ENCODE measurements at regions of chr15 and their contacts with region 1.

Region 1: DNA sequence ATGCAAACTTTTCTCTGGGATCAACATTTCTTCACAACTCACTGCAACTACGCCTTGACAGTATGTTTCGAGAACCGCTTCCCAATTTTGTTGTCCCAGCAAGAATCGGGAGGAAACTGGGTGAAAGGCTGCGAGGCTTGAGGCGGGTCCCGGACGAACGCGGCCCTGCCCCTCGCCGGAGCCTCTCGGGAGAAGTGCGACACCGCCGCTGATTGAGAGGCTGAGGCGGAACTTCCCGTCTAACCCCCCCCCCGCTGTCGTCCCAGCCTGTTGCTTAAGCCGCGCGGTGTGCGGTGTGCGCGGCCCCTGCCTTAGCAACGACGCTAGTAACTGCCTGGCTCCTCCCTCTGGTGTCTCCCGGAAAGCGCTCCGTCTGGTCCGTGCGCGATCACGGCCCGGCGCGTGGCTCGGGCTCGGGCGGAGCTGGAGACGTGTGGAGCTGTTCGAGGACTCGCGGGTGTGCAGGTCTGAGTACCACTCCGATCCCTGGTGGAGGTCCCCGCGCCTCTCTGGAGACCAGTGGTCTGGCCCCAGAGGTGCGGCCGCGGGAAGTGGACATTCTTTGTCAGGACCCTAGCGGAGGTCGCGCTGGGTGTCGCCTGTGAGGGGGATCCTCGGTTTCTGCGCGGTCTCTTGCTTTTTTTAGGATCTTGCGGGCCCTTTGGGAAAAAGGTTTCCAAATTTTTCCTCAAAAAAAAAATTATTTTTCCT is at the starts of genes DTWD1 and FAM227B:
- DNase-seq: peak; percentile 98 to 99
- ATAC-seq: peak; percentile 100
- H3K4me3 ChIP-seq: peak within 1 kb of the TSS; percentile 86 to 92
- H3K27ac ChIP-seq: peak within 1 kb of the TSS; percentile 79 to 86
- H3K4me1 ChIP-seq: peaks cover 0 to 4% of the 10 kb centered on the region in 2 donors
- H3K27me3 ChIP-seq: no peaks in the 10 kb centered on the region
- total RNA-seq, gene DTWD1: 30.0 to 54.4 TPM
- total RNA-seq, gene FAM227B: 4.2 to 4.8 TPM

Region 2: GRCh38 chr15:49155110-49155833 is 465.5 kb before region 1 on chr15 and contains the start of gene COPS2:
- intact Hi-C with region 1: loop called in 1 of 2 experiments (anchors 2 kb)
- DNase-seq: peak; percentile 94 to 95
- ATAC-seq: peak; percentile 99
- H3K4me3 ChIP-seq: peak within 1 kb of the TSS; percentile 91 to 97
- H3K27ac ChIP-seq: peak within 1 kb of the TSS in 1 of 2 donors; percentile 87
- H3K4me1 ChIP-seq: no peaks in the 10 kb centered on the region
- H3K27me3 ChIP-seq: no peaks in the 10 kb centered on the region
- total RNA-seq, gene COPS2: 60.9 to 69.3 TPM

Region 3: DNA sequence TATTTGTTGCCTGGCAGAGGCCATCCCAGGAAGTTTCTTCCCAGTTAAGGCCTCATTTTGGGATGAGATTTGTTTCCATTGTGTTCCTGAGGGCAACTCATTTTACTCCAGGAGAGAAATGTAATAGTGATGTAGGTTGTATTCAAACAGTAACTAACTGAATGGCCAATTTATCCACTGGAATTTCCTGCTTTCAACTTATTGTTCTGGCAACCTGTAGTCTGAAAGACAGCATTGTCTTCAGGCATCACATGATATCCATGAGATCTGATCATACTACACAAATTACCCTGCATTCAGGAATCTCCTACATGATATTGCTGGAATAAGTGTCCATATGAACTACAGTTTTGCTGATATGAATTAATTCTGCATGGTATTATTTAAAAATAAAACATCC is 277.3 kb before region 1 on chr15:
- intact Hi-C with region 1: no loop called
- DNase-seq: no peak
- ATAC-seq: no peak
- H3K4me3 ChIP-seq: no peak overlapping the region
- H3K27ac ChIP-seq: no peak overlapping the region
- H3K4me1 ChIP-seq: no peaks in the 10 kb centered on the region
- H3K27me3 ChIP-seq: no peaks in the 10 kb centered on the region

Region 4: DNA sequence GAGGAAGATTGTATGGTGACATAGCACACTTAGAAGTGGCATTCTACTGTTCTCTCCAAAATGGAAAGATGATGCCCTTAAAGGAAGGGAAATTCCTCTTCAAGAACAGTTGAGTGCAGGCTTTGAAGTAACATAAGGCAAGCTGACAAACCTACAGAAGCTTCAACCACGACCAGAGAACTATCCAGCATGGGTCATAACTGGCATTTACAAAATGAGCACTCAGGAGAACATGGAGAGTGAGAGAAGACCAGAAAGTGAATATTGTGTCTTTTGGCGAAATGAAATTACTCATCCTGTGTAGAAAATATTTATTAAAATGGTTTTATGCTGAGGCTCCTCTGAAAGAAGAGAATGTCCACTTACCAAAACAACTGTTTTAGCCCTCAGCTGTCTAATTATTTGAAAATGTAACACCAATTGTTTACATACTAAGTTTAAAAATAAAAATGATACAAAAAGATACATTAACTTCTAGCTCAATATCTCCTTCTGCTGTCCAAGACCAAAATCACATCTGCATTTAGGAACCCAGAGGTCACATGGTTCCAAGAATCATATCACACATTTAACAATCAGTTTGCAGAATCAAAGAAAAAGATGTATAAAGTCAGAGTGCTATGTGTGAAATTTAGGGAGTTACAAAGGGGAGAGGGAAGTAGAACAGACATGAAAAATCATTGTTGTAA is 281.3 kb after region 1 on chr15:
- intact Hi-C with region 1: loop called in 1 of 2 experiments (anchors 2 kb)
- DNase-seq: no peak
- ATAC-seq: peak; percentile 62
- H3K4me3 ChIP-seq: no peak overlapping the region
- H3K27ac ChIP-seq: peak overlapping the region; percentile 28 to 69
- H3K4me1 ChIP-seq: peaks cover 0 to 5% of the 10 kb centered on the region in 2 donors
- H3K27me3 ChIP-seq: no peaks in the 10 kb centered on the region

Region 5: GRCh38 chr15:49990835-49991545 is 370.2 kb after region 1 on chr15:
- intact Hi-C with region 1: loop called in 1 of 2 experiments (anchors 10 kb)
- DNase-seq: no peak
- ATAC-seq: no peak
- H3K4me3 ChIP-seq: no peak overlapping the region
- H3K27ac ChIP-seq: peak overlapping the region in 1 of 2 donors; percentile 93
- H3K4me1 ChIP-seq: peaks cover 3% of the 10 kb centered on the region in 2 donors
- H3K27me3 ChIP-seq: no peaks in the 10 kb centered on the region

Region 6: GRCh38 chr15:50003786-50004334 is 383.0 kb after region 1 on chr15:
- intact Hi-C with region 1: loop called (anchors 5 to 10 kb)
- DNase-seq: peak; percentile 88 to 93
- ATAC-seq: peak; percentile 94
- H3K4me3 ChIP-seq: no peak overlapping the region
- H3K27ac ChIP-seq: no peak overlapping the region
- H3K4me1 ChIP-seq: no peaks in the 10 kb centered on the region
- H3K27me3 ChIP-seq: no peaks in the 10 kb centered on the region